PC-3 (cell line): ENCODE measurements at regions of chr5 and their contacts with region 1.

Region 1: GRCh38 chr5:149618581-149619251 is 37.4 kb downstream of the ARHGEF37 start:
- DNase-seq: peak; percentile 91
- ATAC-seq: peak; percentile 88
- H3K4me3 ChIP-seq: no peak overlapping the region
- H3K27ac ChIP-seq: peak overlapping the region; percentile 57
- H3K4me1 ChIP-seq: peaks cover 30% of the 10 kb centered on the region
- H3K27me3 ChIP-seq: no peaks in the 10 kb centered on the region
- CTCF ChIP-seq: peak; percentile 99

Region 2: GRCh38 chr5:149381987-149382340 is 236.8 kb before region 1 on chr5:
- CTCF ChIA-PET with region 1: no interaction called
- POLR2A ChIA-PET with region 1: no interaction called
- intact Hi-C with region 1: loop called (anchors 2 kb)
- DNase-seq: peak; percentile 89
- ATAC-seq: peak; percentile 98
- H3K4me3 ChIP-seq: no peak overlapping the region
- H3K27ac ChIP-seq: no peak overlapping the region
- H3K4me1 ChIP-seq: no peaks in the 10 kb centered on the region
- H3K27me3 ChIP-seq: no peaks in the 10 kb centered on the region
- CTCF ChIP-seq: peak; percentile 99

Region 3: GRCh38 chr5:149434162-149435014 is 184.3 kb before region 1 on chr5:
- CTCF ChIA-PET with region 1: interaction called, 6 read pairs
- POLR2A ChIA-PET with region 1: no interaction called
- intact Hi-C with region 1: loop called (anchors 2 kb)
- DNase-seq: peak; percentile 84
- ATAC-seq: peak; percentile 14; the same call in 1 of the 2 replicates
- H3K4me3 ChIP-seq: no peak overlapping the region
- H3K27ac ChIP-seq: no peak overlapping the region
- H3K4me1 ChIP-seq: peaks cover 24% of the 10 kb centered on the region
- H3K27me3 ChIP-seq: no peaks in the 10 kb centered on the region
- CTCF ChIP-seq: peak; percentile 98

Region 4: GRCh38 chr5:149581192-149581861 is 37.4 kb before region 1 on chr5 and contains the start of gene ARHGEF37:
- CTCF ChIA-PET with region 1: interaction called, 6 read pairs
- POLR2A ChIA-PET with region 1: no interaction called
- intact Hi-C with region 1: loop called (anchors 1 kb)
- DNase-seq: peak; percentile 81
- ATAC-seq: peak; percentile 70
- H3K4me3 ChIP-seq: peak within 1 kb of the TSS; percentile 69
- H3K27ac ChIP-seq: peak within 1 kb of the TSS; percentile 21
- H3K4me1 ChIP-seq: peaks cover 20% of the 10 kb centered on the region
- H3K27me3 ChIP-seq: no peaks in the 10 kb centered on the region
- CTCF ChIP-seq: peak; percentile 12; the same call in 1 of the 2 replicates
- total RNA-seq, gene ARHGEF37: 5.2 and 6.5 TPM in 2 replicates

Region 5: GRCh38 chr5:149605998-149606724 is 12.6 kb before region 1 on chr5:
- CTCF ChIA-PET with region 1: interaction called, 12 read pairs
- POLR2A ChIA-PET with region 1: no interaction called
- intact Hi-C with region 1: no loop called
- DNase-seq: peak; percentile 100
- ATAC-seq: peak; percentile 97
- H3K4me3 ChIP-seq: no peak overlapping the region
- H3K27ac ChIP-seq: peak overlapping the region; percentile 93
- H3K4me1 ChIP-seq: peaks cover 42% of the 10 kb centered on the region
- H3K27me3 ChIP-seq: no peaks in the 10 kb centered on the region
- CTCF ChIP-seq: no peak

Region 6: GRCh38 chr5:149951135-149951749 is 332.5 kb after region 1 on chr5:
- CTCF ChIA-PET with region 1: no interaction called
- POLR2A ChIA-PET with region 1: no interaction called
- intact Hi-C with region 1: no loop called
- DNase-seq: no peak
- ATAC-seq: 0 out of 2 replicates have a peak, but pooled peaks have one; percentile 24
- H3K4me3 ChIP-seq: no peak overlapping the region
- H3K27ac ChIP-seq: no peak overlapping the region
- H3K4me1 ChIP-seq: 0 out of 2 replicates have a peak, but pooled peaks cover under 1% of the 10 kb centered on the region
- H3K27me3 ChIP-seq: no peaks in the 10 kb centered on the region
- CTCF ChIP-seq: peak; percentile 20; the same call in 1 of the 2 replicates